ENCODE measurements at regions of chr1 and their contacts with region 1.

Region 1: GRCh38 chr1:211648980-211649934 is 26.2 kb downstream of the NEK2 start:
- DNase-seq: no peak
- H3K4me3 ChIP-seq: no peak overlapping the region
- H3K27ac ChIP-seq: no peak overlapping the region
- H3K4me1 ChIP-seq: peaks cover 35% of the 10 kb centered on the region
- H3K27me3 ChIP-seq: no peaks in the 10 kb centered on the region
- CTCF ChIP-seq: peak in 1 of 2 donors; percentile 11
- POLR2A ChIP-seq: no peak

Region 2: DNA sequence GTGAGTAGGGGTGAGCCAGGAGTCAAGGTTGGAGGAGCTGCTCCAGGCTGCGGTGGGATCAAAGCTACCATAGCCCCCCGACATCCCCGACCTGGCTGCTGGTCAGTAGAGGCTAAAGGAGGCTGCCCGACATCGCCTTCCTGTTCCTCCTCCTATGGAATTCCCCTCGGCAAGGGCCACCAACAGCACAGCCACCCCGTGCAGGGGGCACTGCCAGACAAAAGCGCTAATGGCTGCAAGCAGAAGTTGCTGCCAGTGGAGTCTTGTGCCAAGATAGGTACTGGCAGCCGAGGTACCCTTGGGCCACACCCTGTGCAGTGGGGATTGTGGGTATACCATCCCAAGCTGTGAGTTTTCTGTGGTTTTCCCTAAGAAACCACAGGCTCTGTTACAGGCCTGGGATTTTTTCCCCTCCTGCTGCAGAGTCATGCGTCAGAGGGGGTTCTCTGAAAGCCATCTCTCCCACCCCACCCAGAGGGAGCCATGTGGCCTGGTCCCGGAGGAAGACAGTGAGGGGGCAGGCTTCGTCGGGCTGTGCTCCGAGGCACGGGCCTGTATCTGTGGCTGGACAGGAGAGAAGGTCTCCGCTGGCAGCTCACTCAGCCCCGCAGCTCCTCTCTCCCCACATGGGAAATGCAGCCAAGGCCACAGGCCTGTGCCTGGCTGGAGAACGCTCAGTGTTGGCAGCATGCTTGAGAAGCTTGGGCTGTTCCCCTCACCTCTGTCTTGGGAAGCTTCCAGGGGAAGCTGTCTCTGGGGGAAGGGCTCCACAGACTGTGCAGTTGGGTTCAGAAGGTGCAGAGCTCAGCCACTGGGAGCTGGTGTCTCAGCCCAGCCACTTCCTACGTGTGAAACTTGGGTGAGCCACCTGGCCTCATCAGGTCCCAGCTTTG is 16.4 kb before region 1 on chr1:
- CTCF ChIA-PET with region 1: interaction called, 16 read pairs
- POLR2A ChIA-PET with region 1: no interaction called
- dilution Hi-C with region 1: no loop called
- intact Hi-C with region 1: no loop called
- DNase-seq: no peak
- H3K4me3 ChIP-seq: no peak overlapping the region
- H3K27ac ChIP-seq: no peak overlapping the region
- H3K4me1 ChIP-seq: peaks cover 3% of the 10 kb centered on the region
- H3K27me3 ChIP-seq: no peaks in the 10 kb centered on the region
- CTCF ChIP-seq: no peak
- POLR2A ChIP-seq: no peak

Measured in endothelial cell of umbilical vein (primary cell).